ENCODE measurements at regions of chr20 and their contacts with region 1.

Region 1: DNA sequence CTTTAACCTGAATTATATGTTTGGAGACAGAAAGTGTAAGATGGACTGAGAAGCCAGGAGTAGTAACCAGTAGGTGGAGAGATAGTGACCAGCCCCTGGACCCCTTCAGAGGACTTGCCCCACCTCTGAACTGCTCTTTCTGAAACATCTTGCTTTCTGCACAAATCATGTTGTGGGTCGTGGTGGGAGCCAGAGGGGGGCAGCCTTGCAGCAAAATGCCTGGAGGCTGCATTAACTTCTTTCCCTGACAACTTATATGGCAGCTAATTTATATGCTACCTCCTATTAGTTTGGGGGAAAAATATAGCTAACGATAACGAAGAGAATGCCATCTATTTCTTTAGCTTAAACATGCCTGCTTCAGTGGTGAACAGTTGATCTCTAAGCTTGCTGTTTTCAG is 859.8 kb downstream of the MAFB start:
- DNase-seq: no peak
- H3K4me3 ChIP-seq: no peak overlapping the region
- H3K27me3 ChIP-seq: peaks cover 5% of the 10 kb centered on the region
- CTCF ChIP-seq: peak; percentile 55

Region 2: DNA sequence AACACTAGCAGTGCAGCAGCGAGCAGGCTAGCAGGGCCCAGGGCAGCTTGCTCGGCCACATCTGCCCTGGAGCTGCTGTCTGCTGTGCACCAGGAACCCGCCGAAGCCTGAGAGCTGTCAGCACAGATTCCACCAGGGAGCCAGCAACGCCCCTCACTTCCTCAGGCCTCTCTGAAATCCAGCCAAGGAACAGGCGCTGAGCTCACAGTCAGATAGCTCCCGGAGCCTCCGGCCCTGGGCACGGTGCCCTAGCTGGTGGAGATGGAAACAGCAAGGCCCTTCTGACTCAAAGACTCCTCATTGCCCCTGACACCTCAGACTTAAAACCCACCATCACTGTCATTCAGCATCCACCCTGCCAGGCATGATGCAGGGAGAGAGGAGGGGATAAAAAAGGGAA is 20.4 kb after region 1 on chr20:
- CTCF ChIA-PET with region 1: interaction called, 13 read pairs
- POLR2A ChIA-PET with region 1: no interaction called
- DNase-seq: peak; percentile 78
- H3K4me3 ChIP-seq: no peak overlapping the region
- H3K27me3 ChIP-seq: no peaks in the 10 kb centered on the region; the same call in 1 of the 2 replicates
- CTCF ChIP-seq: no peak

Measured in BJ (cell line).